MCF 10A (cell line): ENCODE measurements at regions of chr1 and their contacts with region 1.

Region 1: DNA sequence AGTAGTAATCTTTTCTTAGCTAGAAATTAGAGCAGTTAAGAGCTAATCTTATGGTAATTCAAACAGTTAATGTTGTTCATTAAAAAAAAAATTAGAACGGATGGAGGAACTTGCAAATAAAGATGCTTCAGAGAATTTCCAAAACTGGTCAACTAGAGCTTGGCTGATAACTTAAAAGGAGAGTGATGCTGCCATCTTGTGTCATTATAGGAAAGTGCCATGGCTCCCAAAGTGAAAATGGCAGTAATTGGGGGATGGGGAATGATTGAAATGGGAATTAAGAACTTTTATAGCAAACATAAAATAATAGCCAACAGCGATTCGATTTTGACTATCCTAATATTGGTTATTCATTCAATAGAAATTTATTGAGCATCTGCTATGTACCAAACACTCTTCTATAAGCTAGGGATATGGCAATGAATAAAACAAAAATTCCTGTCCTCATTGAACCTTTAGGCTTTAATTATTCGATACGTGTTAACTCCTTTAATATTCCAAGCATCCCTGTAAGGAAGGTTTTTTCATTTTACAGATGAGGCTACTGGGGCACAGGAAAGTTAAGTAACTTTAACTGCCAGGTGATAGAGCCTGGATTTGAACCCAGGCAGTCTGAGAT is 5.7 kb upstream of the PLPP3 start:
- DNase-seq: peak; percentile 71
- H3K4me3 Mint-ChIP-seq: no peak overlapping the region
- H3K27ac Mint-ChIP-seq: no peak overlapping the region
- H3K4me1 Mint-ChIP-seq: no peaks in the 10 kb centered on the region
- H3K27me3 Mint-ChIP-seq: no peaks in the 10 kb centered on the region
- CTCF ChIP-seq: peak; percentile 74

Region 2: GRCh38 chr1:55140546-55140983 is 1444.5 kb before region 1 on chr1:
- CTCF ChIA-PET with region 1: interaction called, 4 read pairs
- POLR2A ChIA-PET with region 1: no interaction called
- intact Hi-C with region 1: loop called (anchors 1 kb)
- DNase-seq: peak; percentile 86
- H3K4me3 Mint-ChIP-seq: no peak overlapping the region
- H3K27ac Mint-ChIP-seq: peak overlapping the region; percentile 46
- H3K4me1 Mint-ChIP-seq: peaks cover 5% of the 10 kb centered on the region
- H3K27me3 Mint-ChIP-seq: no peaks in the 10 kb centered on the region
- CTCF ChIP-seq: peak; percentile 66

Region 3: GRCh38 chr1:55284852-55285251 is 1300.2 kb before region 1 on chr1:
- CTCF ChIA-PET with region 1: interaction called, 129 read pairs
- POLR2A ChIA-PET with region 1: interaction called, 3 read pairs
- intact Hi-C with region 1: loop called (anchors 1 kb)
- DNase-seq: peak; percentile 67
- H3K4me3 Mint-ChIP-seq: no peak overlapping the region
- H3K27ac Mint-ChIP-seq: no peak overlapping the region
- H3K4me1 Mint-ChIP-seq: peaks cover 5% of the 10 kb centered on the region
- H3K27me3 Mint-ChIP-seq: no peaks in the 10 kb centered on the region
- CTCF ChIP-seq: peak; percentile 57

Region 4: DNA sequence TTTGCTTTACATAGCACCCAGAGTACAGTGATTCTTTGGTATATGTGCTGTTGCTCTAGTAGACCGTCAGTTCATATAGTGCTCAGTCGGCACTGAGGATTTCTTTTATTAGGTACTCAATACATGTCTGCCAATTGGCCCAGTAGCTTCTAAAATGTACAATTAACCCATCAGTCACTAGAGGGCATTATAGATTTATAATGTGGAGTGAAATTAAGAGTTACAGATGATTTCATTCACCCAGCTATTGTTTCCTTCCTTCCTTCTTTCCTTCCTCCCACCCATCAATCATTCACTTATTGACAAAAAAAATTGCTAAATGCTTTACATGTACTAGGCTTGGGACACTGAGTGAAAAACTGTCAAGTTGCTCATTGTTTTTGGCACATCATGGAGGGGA is 1106.3 kb before region 1 on chr1:
- CTCF ChIA-PET with region 1: interaction called, 39 read pairs
- POLR2A ChIA-PET with region 1: no interaction called
- intact Hi-C with region 1: no loop called
- DNase-seq: peak; percentile 40
- H3K4me3 Mint-ChIP-seq: no peak overlapping the region
- H3K27ac Mint-ChIP-seq: no peak overlapping the region
- H3K4me1 Mint-ChIP-seq: peaks cover 12% of the 10 kb centered on the region
- H3K27me3 Mint-ChIP-seq: no peaks in the 10 kb centered on the region
- CTCF ChIP-seq: peak; percentile 34

Region 5: DNA sequence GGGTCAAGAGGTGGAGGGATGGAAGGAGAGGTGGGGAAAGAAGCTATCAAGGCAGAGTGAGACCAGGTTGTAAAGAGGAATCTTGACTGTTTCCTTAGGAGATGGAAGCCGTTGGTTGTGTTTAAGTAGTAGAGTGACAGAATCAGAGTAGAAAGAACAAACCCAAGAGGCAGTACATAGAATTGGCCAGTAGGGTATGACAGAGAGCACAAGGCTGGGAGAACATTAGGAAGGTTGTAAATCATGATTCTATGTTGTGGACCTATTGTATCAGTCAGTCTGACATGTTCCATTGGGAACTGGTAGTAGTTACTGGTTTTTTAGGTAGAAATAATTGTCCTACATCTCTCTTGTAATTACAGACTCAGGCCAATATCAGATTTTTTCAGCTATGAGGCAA is 883.0 kb before region 1 on chr1:
- CTCF ChIA-PET with region 1: interaction called, 5 read pairs
- POLR2A ChIA-PET with region 1: no interaction called
- intact Hi-C with region 1: loop called (anchors 2 kb)
- DNase-seq: peak; percentile 68
- H3K4me3 Mint-ChIP-seq: no peak overlapping the region
- H3K27ac Mint-ChIP-seq: peak overlapping the region; percentile 43
- H3K4me1 Mint-ChIP-seq: peaks cover 6% of the 10 kb centered on the region
- H3K27me3 Mint-ChIP-seq: no peaks in the 10 kb centered on the region
- CTCF ChIP-seq: peak; percentile 70

Region 6: DNA sequence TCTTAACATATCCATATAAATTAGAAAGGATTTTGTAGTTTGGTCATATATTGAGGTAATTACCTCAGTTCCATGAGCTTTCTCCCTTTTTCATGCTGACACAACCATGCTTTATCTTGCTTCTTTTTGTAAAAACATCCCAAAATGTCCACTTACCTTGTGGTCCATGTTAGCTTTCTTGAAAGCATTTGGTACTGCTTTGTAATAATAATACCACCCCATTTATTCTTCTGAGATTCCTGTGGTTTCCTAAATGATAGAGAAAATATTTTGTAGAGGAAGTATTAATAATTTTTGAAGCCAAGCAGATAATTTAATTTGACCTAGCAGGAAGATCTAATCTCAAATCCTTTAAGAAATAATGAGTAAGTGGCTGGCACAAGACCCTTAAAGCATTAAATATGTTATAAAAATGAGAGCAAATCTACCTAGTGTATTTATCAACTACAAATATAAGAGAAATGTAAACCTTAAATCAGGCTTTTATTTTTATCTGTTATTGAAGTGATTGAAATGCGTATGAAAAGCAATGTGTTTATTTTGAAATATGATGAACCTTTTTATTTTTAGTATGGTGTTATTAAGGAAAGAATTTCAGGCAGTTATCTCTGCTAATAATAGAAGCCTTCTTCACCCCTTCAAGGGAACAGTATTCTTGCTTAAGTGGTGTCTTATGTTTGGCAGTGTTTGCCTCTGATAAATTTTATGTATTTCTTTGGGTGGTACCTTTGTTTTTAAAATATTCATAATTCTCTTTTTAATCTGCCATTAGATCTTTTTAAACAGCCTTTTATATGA is 69.3 kb after region 1 on chr1:
- CTCF ChIA-PET with region 1: no interaction called
- POLR2A ChIA-PET with region 1: no interaction called
- intact Hi-C with region 1: no loop called
- DNase-seq: no peak
- H3K4me3 Mint-ChIP-seq: no peak overlapping the region
- H3K27ac Mint-ChIP-seq: no peak overlapping the region
- H3K4me1 Mint-ChIP-seq: no peaks in the 10 kb centered on the region
- H3K27me3 Mint-ChIP-seq: no peaks in the 10 kb centered on the region
- CTCF ChIP-seq: no peak

Region 7: DNA sequence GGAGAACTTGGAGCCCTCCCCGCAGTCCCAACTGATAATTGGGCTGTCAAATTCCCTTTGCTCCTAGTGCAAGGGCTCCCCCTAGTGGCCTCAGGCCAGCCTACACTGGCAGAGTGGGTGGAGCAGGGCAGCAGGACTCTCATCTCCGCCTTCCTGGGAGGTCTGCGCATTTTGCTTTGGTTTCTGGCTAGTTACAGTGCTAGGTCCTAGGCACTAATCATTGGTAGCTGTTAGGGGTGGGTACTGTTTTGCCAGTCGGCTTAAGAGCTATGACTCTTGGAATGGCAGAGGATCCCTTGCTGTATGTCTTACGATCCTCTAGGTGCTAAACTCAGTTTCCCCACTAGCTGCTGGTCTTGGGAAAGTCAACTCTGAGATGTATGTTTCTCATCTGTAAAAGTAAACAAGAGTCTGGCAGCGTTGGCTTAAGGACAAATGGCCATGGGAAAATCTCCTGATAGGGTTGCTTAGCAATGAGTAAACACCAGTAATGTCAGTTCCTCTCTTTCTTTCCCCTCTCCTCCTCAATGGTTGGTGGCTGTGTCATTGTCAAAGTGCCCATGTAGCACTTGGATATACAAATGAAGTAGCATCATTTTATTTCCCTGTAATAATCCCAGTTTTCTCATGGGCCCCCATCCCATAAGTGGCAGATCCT is 236.2 kb after region 1 on chr1:
- CTCF ChIA-PET with region 1: interaction called, 26 read pairs
- POLR2A ChIA-PET with region 1: no interaction called
- intact Hi-C with region 1: loop called (anchors 2 kb)
- DNase-seq: peak; percentile 78
- H3K4me3 Mint-ChIP-seq: no peak overlapping the region
- H3K27ac Mint-ChIP-seq: no peak overlapping the region
- H3K4me1 Mint-ChIP-seq: peaks cover 8% of the 10 kb centered on the region
- H3K27me3 Mint-ChIP-seq: peaks cover 11% of the 10 kb centered on the region
- CTCF ChIP-seq: peak; percentile 95